ENCODE measurements at regions of chr12 and their contacts with region 1.

Region 1: DNA sequence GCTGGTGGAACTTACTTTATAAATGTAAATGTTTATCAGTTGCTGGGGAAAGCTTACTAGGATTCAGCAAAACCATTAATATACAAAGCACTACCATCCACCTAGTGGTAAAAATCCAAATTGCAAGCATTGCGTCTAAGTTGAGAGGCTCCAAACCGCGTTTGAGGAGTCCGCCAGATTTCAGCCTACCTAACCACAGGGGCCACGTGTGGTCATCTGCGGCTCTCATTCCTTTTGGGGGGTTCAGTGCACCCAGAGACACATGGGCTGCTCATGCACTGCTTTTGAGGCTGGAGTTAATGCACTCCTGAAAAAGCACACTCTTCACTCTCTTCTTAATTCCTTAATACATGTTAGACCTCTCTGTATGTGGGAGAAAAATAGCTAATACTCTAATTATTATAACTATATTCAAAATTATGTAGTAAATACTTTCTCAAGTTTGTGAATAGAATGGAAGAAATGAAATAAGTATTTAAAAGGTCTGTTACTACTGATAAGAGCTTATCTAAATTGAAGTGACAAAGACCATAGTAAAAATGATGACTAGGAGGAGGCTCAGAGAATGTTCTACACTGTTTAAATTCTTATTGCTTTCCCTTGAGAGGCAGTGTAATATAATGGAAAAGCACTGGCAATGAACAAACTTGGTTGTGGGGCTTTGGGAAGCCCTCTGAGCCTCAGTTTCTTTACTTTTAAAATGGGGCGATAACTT is 41.4 kb upstream of the MANSC4 start:
- DNase-seq: peak; percentile 28
- H3K4me3 Mint-ChIP-seq: no peak overlapping the region
- H3K27ac Mint-ChIP-seq: no peak overlapping the region
- H3K4me1 Mint-ChIP-seq: peaks cover 43% of the 10 kb centered on the region
- H3K27me3 Mint-ChIP-seq: peaks cover 33% of the 10 kb centered on the region

Region 2: DNA sequence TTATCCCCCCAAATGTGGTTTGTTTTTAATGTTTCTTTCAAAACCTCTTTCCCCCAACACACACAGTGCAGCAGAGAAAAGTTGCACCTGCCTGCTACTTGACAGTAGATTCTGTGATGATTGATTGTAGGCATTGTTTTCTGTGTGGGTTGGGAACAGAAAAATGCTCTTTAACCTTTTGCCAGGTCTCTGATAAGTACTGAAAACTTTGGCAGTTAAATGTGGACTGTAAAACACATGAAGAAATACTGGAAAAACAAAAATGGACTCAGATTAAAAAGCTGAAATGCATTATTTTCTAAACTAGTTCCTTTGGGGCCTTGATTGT is 548.8 kb before region 1 on chr12:
- CTCF ChIA-PET with region 1: no interaction called
- POLR2A ChIA-PET with region 1: no interaction called
- intact Hi-C with region 1: no loop called
- DNase-seq: no peak
- H3K4me3 Mint-ChIP-seq: no peak overlapping the region
- H3K27ac Mint-ChIP-seq: no peak overlapping the region
- H3K4me1 Mint-ChIP-seq: peaks cover 4% of the 10 kb centered on the region
- H3K27me3 Mint-ChIP-seq: no peaks in the 10 kb centered on the region

Region 3: DNA sequence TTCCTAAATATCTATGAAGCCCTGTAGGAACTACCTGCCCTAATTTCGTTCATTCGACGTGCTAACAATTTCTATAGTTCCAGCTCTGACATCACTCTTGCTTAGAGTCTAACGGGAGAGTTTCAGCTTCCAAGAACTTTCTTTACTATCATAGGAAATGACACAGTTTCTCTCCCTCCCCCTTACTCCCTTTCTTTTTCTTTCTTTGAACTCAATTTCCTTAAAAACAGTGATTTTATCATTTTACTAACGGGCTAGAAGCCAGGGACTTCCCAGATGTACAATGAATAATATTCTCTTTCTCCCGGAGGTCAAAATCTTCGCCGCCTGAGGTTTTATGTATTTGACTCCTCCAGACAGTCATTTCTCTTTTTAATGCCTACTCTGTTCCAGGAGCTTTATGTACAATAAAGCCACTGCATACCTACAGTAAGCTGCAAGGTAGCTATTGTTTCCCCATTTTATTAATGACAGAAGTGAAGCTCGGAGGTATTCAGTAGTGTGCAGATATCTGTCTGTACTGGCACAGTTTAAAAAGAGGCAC is 359.2 kb before region 1 on chr12:
- CTCF ChIA-PET with region 1: no interaction called
- POLR2A ChIA-PET with region 1: no interaction called
- intact Hi-C with region 1: loop called (anchors 1 kb)
- DNase-seq: peak; percentile 34
- H3K4me3 Mint-ChIP-seq: peak overlapping the region; percentile 20
- H3K27ac Mint-ChIP-seq: peak overlapping the region; percentile 8
- H3K4me1 Mint-ChIP-seq: peaks cover 50% of the 10 kb centered on the region
- H3K27me3 Mint-ChIP-seq: peaks cover 20% of the 10 kb centered on the region

Region 4: GRCh38 chr12:27667540-27667939 is 153.9 kb before region 1 on chr12:
- CTCF ChIA-PET with region 1: no interaction called
- POLR2A ChIA-PET with region 1: no interaction called
- intact Hi-C with region 1: no loop called
- DNase-seq: peak; percentile 34
- H3K4me3 Mint-ChIP-seq: no peak overlapping the region
- H3K27ac Mint-ChIP-seq: no peak overlapping the region
- H3K4me1 Mint-ChIP-seq: no peaks in the 10 kb centered on the region
- H3K27me3 Mint-ChIP-seq: no peaks in the 10 kb centered on the region

Region 5: GRCh38 chr12:27733052-27733656 is 88.3 kb before region 1 on chr12:
- CTCF ChIA-PET with region 1: interaction called, 55 read pairs
- POLR2A ChIA-PET with region 1: no interaction called
- intact Hi-C with region 1: loop called (anchors 1 kb)
- DNase-seq: peak; percentile 46
- H3K4me3 Mint-ChIP-seq: no peak overlapping the region
- H3K27ac Mint-ChIP-seq: no peak overlapping the region
- H3K4me1 Mint-ChIP-seq: no peaks in the 10 kb centered on the region
- H3K27me3 Mint-ChIP-seq: no peaks in the 10 kb centered on the region

Region 6: DNA sequence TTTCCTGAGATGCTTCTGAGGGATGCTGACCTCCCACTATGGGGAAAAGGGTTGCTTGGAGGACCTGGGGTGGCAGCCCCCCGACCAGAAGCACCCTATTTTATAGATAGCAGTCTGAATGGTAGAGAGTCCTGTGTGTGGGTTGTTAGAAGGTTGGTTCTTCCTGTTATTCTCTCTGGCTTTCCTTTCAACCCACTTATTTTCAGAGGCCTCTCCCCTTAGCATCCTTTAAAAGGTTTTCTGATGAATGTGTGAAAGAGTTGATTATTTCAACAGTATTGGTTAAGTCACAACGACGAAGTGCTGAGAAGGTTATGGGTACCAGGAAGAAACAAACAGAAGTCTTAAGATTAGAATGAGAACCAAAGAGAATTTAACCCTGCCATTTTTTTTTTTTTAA is 20.6 kb before region 1 on chr12:
- CTCF ChIA-PET with region 1: interaction called, 27 read pairs
- POLR2A ChIA-PET with region 1: interaction called, 29 read pairs
- intact Hi-C with region 1: loop called (anchors 1 kb)
- DNase-seq: no peak
- H3K4me3 Mint-ChIP-seq: no peak overlapping the region
- H3K27ac Mint-ChIP-seq: peak overlapping the region; percentile 9
- H3K4me1 Mint-ChIP-seq: peaks cover 34% of the 10 kb centered on the region
- H3K27me3 Mint-ChIP-seq: peaks cover 3% of the 10 kb centered on the region

Region 7: DNA sequence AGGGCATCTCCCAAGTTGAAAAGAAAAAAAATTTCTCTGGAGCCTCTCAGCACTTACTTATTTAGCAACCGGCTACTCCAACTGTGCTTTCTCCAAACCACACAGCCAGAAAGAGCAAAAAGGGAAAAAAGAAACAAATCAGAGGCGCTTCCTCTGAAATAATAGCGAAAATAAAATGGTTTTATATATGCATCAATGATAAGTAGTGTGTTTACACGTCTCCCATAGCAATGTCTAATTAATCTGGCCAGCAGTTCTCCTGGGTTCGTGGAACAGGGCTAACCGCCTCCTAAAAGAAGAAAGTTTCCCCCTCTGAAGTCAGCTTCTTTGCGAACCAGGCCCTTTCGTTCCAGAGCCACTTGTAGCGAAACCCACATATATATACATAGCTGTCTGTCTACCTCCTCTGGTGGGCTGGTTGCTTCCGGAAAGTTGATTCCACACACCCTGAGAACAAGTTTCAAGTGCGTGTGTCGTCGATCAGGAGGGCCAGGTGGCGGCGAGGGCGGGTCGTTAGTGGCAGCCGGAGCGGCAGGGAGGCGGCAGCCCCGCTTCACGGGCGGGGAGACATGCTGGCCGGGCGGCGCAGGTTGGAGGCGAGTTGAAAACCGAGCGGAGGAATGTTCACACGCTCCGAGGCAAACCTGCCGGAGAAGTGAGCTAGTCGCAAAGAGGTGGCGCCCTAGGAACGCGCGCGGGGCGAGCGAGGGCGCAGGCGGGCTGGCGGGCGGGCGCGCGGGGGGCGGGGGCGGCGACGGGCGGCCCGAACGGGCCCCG is 148.4 kb after region 1 on chr12:
- CTCF ChIA-PET with region 1: no interaction called
- POLR2A ChIA-PET with region 1: no interaction called
- intact Hi-C with region 1: no loop called
- DNase-seq: peak; percentile 70
- H3K4me3 Mint-ChIP-seq: peak overlapping the region; percentile 75
- H3K27ac Mint-ChIP-seq: no peak overlapping the region
- H3K4me1 Mint-ChIP-seq: peaks cover 28% of the 10 kb centered on the region
- H3K27me3 Mint-ChIP-seq: peaks cover 78% of the 10 kb centered on the region

Region 8: DNA sequence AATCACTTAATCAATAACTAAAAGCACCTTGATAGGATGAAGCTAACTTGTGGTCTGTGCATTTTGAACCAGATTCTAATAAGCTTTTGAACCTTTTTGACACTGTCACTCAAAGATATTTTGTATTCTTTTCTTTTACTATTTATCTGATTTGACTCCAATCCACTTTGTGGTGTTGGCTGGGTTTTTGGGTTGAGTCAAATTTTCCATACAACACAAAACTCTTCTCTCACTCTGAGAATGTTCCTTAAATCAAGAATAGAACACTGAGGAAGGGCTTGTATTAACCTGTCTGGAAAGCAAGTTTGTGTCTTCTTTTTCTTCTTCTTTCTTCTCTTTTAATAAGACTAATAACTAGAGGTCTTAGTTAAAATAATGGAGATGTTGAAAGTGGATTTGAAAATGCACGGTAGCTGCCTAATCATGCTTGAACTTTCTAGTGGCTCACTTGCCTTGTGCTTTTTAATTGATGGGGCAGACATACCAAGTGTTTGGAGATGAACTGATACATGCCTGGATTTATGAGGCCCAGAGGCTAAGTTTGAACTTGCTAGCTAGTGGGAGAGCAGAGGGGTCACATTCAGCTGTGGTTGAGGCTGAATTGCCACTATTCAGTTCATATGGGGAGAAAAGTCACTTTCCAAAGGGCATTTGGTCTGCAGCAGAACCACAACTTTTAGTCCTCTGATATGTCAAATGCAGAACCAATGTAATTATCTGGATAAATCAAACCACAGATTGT is 244.6 kb after region 1 on chr12:
- CTCF ChIA-PET with region 1: no interaction called
- POLR2A ChIA-PET with region 1: no interaction called
- intact Hi-C with region 1: loop called (anchors 5 kb)
- DNase-seq: no peak
- H3K4me3 Mint-ChIP-seq: no peak overlapping the region
- H3K27ac Mint-ChIP-seq: no peak overlapping the region
- H3K4me1 Mint-ChIP-seq: peaks cover 11% of the 10 kb centered on the region
- H3K27me3 Mint-ChIP-seq: peaks cover 3% of the 10 kb centered on the region

Region 9: DNA sequence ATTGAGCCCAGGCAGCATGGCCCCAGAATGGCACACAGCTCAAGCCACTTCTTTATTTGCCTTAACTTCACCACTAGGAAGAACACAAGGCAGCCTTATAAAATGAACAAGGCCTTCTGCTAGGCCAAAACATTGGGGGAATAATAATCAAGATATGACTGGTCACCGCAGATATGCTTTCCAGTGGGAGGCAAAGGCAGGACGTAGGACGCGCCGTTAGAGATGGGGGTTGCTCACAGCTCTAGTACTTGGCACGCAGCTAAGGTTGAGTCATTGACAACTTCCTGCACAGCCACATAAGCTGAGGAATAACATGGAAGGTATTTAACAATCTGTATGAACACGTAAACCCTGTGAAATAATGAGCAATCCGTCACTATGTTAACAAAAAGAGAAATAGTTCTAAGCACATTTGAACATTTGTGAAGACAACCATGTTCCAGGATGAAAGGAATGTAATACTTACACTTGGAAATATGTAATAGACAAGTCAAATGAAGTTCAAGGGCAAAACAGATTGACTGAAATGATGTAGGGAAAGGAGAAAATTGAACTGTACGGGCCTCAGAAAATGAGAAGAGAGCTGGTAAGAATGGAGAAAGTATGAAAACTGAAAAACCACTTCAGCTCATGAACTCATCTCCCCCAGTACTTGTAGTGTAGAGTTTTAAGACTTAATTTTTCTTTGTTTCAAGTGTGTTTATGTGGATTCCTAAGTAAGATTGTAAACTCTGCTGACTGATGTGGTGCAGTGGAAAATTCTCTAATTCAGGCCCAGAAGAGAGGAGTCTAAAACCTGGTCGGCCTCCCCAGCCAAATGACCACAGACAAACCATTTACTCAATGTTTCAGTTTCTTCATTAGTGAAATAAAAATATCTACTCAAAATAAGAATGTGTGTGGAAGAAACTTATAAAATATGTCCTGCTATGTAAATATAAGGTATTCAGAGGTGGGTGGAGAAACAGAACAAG is 309.5 kb after region 1 on chr12:
- CTCF ChIA-PET with region 1: no interaction called
- POLR2A ChIA-PET with region 1: no interaction called
- intact Hi-C with region 1: no loop called
- DNase-seq: peak; percentile 28
- H3K4me3 Mint-ChIP-seq: no peak overlapping the region
- H3K27ac Mint-ChIP-seq: peak overlapping the region; percentile 48
- H3K4me1 Mint-ChIP-seq: peaks cover 11% of the 10 kb centered on the region
- H3K27me3 Mint-ChIP-seq: no peaks in the 10 kb centered on the region

Region 10: GRCh38 chr12:29082522-29082921 is 1261.1 kb after region 1 on chr12:
- CTCF ChIA-PET with region 1: interaction called, 3 read pairs
- POLR2A ChIA-PET with region 1: no interaction called
- intact Hi-C with region 1: loop called (anchors 5 kb)
- DNase-seq: no peak
- H3K4me3 Mint-ChIP-seq: no peak overlapping the region
- H3K27ac Mint-ChIP-seq: peak overlapping the region; percentile 40
- H3K4me1 Mint-ChIP-seq: peaks cover 16% of the 10 kb centered on the region
- H3K27me3 Mint-ChIP-seq: peaks cover 25% of the 10 kb centered on the region

Measured in activated CD4-positive, alpha-beta memory T cell treated with anti-CD3 and anti-CD28 coated beads for 36 hours (primary cell).